Colonic mucosa (tissue), 4 donors: ENCODE measurements at regions of chr1 and their contacts with region 1.

Region 1: DNA sequence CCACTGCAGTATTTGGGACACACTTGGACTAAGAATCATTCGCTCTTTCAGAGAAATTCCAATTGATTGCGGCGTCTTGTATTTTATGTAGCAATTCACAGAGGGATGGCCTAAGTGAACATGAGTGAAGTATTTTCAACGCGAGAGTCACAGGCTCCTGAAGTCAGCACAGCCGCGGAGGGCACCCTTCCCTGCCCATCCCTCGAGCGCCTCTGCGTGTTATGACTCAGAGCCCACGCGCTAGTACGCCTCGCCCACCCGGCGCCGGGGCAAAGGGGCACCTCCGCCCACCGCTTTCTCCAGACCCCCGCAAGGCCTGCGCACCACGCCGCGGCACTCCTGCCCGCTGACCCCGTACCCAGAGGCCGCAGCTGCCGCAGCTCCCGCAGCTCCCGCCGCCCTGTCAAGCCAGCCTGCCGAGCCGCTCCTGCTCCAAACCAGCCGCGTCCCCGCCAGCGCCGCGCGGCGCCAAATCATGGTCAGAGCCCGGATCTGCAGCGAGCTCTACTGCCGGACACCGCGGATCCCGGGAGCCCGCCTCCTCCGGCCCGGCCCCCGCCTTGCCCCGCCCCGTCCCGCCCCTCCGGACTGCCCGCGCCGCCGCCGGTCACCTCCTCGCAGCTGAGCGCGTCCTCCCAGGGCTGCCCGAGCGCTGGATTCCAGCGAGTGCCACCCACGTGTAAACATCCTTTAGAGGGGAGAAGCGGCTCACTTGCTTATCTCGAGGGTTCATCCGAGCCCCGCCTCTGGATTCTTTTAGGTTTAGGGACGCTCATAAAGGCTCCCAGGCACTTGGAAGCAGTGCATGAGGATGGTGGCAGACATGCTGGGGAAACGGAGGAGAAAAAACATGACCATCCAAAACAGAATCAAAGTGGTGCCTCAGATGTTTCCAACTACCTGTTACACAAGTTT is at the start of gene GLRX2:
- DNase-seq: peak; percentile 89
- H3K4me3 ChIP-seq: peak within 1 kb of the TSS; percentile 87
- H3K27ac ChIP-seq: peak within 1 kb of the TSS; percentile 95
- H3K4me1 ChIP-seq: no peaks in the 10 kb centered on the region
- H3K27me3 ChIP-seq: no peaks in the 10 kb centered on the region
- CTCF ChIP-seq: no peak
- total RNA-seq, gene GLRX2: 22.3 to 38.1 TPM

Region 2: DNA sequence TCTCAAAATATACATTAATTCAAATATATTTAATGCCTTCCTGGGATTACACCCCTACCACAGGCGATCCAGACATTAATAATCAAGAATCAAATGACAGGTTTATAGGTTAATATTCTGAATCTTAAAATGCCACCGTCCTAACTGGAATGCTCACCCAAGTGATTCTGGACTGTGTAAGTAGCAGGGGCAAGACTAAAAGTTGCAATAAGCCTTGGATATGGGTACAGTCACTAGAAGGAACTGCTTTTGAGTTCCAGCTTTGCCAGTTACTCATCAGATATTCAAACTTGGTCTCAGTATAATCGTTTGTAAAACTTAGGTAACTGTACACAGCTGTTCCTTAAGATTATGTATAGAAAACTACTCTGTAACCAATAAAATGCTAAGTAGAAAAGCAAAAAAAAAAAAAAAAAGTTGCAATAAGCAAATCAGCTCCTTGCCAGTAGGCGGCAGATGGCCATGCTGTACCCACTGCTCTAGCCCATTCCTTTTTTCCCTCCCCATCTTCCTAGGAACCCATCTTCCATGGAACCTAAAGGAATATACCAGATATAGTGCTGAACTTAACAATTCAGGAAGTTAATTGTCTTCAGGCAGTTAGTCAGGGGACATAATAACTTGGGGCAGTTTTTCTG is 35.3 kb before region 1 on chr1:
- intact Hi-C with region 1: loop called (anchors 5 kb)
- DNase-seq: no peak
- H3K4me3 ChIP-seq: no peak overlapping the region
- H3K27ac ChIP-seq: no peak overlapping the region
- H3K4me1 ChIP-seq: no peaks in the 10 kb centered on the region
- H3K27me3 ChIP-seq: no peaks in the 10 kb centered on the region
- CTCF ChIP-seq: no peak

Region 3: DNA sequence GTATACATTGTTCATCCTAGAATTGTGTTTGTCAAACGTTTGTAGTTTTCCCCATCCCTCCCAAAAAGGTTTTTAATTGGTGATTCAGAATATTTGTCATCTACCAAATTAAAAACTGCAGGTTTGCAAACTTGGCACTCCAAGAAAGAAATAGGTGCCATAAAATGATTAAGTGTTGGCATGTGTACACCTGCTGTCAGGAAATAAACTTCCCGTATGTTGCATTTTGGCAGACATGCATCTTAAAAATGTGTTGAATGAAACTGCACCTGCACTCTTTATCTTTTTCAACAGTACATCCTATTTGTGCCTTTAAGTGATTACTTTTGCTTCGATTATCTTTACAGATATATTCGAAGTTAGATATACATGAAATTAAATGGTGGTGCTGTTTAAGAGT is 73.9 kb after region 1 on chr1:
- intact Hi-C with region 1: no loop called
- DNase-seq: no peak
- H3K4me3 ChIP-seq: no peak overlapping the region
- H3K27ac ChIP-seq: no peak overlapping the region
- H3K4me1 ChIP-seq: peaks cover 3% of the 10 kb centered on the region
- H3K27me3 ChIP-seq: no peaks in the 10 kb centered on the region
- CTCF ChIP-seq: no peak

Region 4: DNA sequence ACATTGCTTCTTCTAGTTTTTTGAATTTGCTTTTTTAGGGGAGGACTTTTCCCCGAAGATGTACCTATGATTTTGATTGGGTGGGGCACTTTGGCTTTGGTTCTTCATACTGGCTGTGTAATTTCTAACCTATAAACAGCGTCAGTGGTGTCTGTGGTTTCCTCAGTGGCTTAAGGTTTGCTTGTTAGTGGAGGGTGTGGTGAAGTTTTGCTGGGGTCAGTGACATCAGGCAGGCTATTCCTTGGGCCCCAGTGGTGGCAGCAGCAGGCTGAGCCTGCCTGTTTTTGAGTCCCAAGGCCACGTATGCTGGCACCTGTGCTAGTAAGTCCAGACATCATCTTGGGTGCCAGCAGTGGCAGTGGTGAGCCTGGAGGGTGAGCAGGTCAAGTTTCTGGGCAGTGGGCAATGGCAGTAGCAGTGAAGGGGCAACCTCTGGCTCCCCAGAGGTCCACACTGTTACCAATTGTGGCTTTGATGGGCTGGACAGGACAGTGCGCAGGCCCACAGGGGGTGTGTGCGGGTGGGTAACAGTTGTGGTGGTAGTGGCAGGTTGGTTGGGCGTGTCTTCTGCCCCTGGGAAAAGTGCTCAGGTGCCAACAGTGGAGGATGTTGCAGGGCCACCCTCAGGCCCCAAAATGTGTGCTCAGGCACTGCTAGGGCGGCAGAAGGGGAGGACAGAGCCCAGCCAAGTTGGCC is 136.1 kb after region 1 on chr1:
- intact Hi-C with region 1: no loop called
- DNase-seq: no peak
- H3K4me3 ChIP-seq: no peak overlapping the region
- H3K27ac ChIP-seq: no peak overlapping the region
- H3K4me1 ChIP-seq: no peaks in the 10 kb centered on the region
- H3K27me3 ChIP-seq: no peaks in the 10 kb centered on the region
- CTCF ChIP-seq: no peak